ENCODE measurements at regions of chr2 and their contacts with region 1.

Region 1: GRCh38 chr2:154452906-154453493 is 245.5 kb upstream of the KCNJ3 start:
- DNase-seq: peak; percentile 21
- H3K4me3 ChIP-seq: no peak overlapping the region
- H3K27ac ChIP-seq: no peak overlapping the region
- H3K4me1 ChIP-seq: no peaks in the 10 kb centered on the region
- CTCF ChIP-seq: peak; percentile 78

Region 2: DNA sequence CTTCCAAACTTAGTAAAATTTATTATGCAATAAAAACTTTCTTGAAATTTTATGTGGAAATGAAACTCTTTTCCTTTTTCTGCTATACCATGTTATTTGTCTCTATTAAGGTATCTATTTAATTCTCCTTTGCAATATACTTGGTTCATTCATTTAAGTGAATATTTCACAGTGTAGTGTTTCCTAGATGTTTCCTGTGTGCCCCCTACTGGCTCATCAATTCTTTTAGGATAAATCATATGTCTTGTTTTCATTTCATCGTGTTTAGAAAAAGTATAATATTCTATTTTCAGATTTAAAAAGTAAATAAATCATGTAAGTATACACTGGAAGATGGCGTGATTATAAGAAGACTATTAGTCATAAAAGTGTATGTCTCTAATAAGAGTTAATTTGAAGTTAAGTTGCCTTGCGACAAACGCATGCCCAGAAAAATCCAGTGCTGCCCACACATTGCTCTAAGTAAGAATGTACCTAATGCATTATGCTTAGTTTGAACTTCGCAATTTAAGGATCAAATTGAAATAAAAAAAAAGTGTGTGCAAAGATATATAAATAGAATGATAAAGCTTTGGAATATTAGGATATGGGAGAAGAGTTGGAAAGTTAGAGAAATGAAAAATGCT is 770.9 kb after region 1 on chr2:
- CTCF ChIA-PET with region 1: no interaction called
- POLR2A ChIA-PET with region 1: no interaction called
- intact Hi-C with region 1: loop called (anchors 10 kb)
- DNase-seq: peak; percentile 50
- H3K4me3 ChIP-seq: no peak overlapping the region
- H3K27ac ChIP-seq: no peak overlapping the region
- H3K4me1 ChIP-seq: no peaks in the 10 kb centered on the region
- CTCF ChIP-seq: peak; percentile 91

Region 3: GRCh38 chr2:155310589-155310988 is 857.6 kb after region 1 on chr2:
- CTCF ChIA-PET with region 1: no interaction called
- POLR2A ChIA-PET with region 1: no interaction called
- intact Hi-C with region 1: loop called (anchors 5 kb)
- DNase-seq: peak; percentile 50
- H3K4me3 ChIP-seq: no peak overlapping the region
- H3K27ac ChIP-seq: no peak overlapping the region
- H3K4me1 ChIP-seq: no peaks in the 10 kb centered on the region
- CTCF ChIP-seq: peak; percentile 86